Posterior vena cava (tissue), 2 donors: ENCODE measurements at regions of chr6 and their contacts with region 1.

Region 1: DNA sequence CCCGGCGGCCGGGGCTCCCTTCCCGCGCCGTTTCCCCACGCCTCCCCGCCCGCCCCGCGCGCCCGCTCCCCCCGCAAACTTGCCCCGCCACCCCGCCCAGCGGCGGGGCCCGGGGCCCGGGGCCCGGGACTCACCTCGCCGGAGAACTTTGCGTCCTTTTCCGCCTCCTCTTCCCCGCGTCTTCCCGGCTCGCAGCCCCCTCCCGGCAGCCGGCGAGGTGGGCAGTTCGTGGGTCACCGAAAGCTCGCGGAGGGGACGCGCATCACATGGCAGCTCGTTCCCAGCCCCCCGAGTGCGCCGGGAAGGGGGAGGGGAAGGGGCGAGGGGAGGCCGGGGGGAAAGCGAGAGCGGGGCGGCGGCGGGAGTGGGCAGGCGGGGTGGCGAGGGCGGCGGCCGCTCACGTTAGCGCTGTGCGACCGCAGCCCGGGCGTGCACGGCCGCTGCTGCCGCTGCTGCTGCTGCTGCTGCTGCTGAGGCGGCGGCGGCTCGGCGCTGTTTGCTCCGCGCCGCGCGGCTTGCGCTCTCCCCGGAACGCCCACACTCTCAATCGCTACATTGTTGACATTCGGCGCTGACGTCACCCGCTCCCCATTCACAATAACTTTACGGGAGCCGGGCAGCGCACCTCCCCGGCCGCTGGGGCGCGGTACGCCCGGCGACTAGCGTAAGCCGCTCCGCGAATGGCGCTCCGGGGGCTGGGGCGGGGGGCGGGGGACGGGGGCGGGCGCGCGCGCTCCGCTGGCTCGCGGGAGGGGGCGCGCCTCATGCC is at the start of gene BACH2:
- DNase-seq: peak; percentile 93
- total RNA-seq, gene BACH2: 3.9 to 4.5 TPM

Region 2: DNA sequence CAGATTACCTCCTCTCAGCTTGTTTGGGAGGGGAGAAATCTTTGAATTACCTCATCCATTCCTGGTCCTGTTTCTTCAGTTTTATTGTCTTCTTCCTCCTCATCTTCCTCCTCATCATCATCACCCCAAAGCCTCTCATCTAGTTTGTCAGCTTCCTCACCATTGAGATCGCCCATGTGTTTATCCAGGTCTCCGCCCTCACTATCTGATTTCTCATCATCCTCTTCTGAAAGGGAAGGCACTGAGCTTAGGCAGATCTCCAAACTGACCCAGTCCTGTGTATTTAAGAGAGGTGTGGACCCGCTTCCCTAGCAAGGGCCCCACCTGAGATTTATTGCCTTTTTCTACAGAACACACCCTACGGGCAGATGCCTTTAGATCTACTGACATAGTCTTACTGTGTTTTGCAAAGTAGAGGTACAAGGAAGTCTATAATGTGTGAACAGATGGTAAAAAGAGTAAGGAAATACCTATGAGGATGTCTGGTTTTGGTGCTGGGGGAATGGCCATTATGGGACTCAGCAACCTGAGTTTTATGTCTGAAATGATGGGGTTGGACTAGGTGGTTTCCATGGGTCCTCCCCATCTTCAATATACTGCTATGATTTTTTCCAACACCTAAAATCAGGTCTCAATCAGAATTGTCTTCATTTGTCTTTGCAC is 633.7 kb before region 1 on chr6:
- intact Hi-C with region 1: no loop called
- DNase-seq: no peak

Region 3: GRCh38 chr6:89970609-89971337 is 325.8 kb before region 1 on chr6:
- intact Hi-C with region 1: loop called in 1 of 2 experiments (anchors 10 kb)
- DNase-seq: no peak

Region 4: GRCh38 chr6:90256698-90257485 is 39.6 kb before region 1 on chr6:
- intact Hi-C with region 1: no loop called
- DNase-seq: no peak

Region 5: GRCh38 chr6:90369024-90369519 is 72.5 kb after region 1 on chr6:
- intact Hi-C with region 1: loop called in 1 of 2 experiments (anchors 10 kb)
- DNase-seq: peak; percentile 82